ENCODE measurements at regions of chr14 and their contacts with region 1.

Region 1: DNA sequence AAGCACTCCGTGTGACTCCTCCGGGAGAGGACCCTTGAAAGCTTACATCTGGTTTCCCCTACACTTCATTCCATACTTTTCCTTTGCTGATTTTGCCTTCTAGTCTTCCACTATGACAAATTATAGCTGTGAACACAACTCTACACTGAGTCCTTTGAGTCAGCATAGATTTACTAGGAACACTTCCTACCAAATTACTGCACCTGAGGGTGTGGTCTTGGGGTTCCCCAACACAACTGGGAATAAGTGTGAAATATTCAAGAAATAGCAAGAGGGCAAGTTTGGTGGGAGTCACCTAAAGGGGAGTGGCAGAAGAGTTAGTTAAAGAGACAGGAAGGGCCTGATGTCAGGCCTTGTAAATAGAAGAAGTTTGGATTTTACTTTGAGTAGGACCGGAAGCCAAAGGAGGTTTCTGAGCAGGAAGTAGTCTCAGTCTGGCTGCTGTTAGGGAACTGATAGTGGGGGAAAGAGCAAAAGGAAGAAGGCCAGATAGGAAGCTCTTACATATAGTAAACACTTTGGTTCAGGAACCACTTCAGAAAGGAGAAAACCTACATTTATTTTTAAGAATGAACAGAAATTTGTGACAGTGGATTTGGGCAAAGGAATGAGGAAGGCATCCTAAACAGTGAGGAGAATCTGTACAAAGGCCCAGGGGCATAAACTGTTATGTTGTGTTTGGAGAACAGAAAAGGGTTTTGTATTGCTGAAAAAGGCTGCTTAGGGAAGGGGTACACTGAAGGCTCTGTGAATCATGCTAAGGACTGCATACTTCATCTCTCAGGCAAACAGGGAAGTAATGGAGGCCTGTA is 14.2 kb downstream of the SEL1L start:
- DNase-seq: peak in 1 of 2 donors; percentile 29
- ATAC-seq: peak; percentile 56 to 86 (median 79)
- H3K4me3 ChIP-seq: no peak overlapping the region
- H3K27ac ChIP-seq: peak overlapping the region in 9 of 10 donors; percentile 33 to 92 (median 69)
- H3K4me1 ChIP-seq: peaks cover 6 to 51% (median 40%) of the 10 kb centered on the region in 9 donors
- H3K27me3 ChIP-seq: no peaks in the 10 kb centered on the region
- CTCF ChIP-seq: no peak

Region 2: GRCh38 chr14:81533536-81534343 is 14.3 kb after region 1 on chr14 and contains the start of gene SEL1L:
- intact Hi-C with region 1: loop called in 1 of 10 experiments (anchors 2 kb)
- DNase-seq: peak; percentile 99 to 100
- ATAC-seq: peak; percentile 98 to 100 (median 99)
- H3K4me3 ChIP-seq: peak within 1 kb of the TSS; percentile 84 to 99 (median 94)
- H3K27ac ChIP-seq: peak within 1 kb of the TSS in 9 of 10 donors; percentile 19 to 92 (median 77)
- H3K4me1 ChIP-seq: peaks cover 0 to 79% (median 64%) of the 10 kb centered on the region in 9 donors
- H3K27me3 ChIP-seq: no peaks in the 10 kb centered on the region
- CTCF ChIP-seq: no peak
- total RNA-seq, gene SEL1L: 47.6 to 87.7 (median 58.3) TPM

Region 3: DNA sequence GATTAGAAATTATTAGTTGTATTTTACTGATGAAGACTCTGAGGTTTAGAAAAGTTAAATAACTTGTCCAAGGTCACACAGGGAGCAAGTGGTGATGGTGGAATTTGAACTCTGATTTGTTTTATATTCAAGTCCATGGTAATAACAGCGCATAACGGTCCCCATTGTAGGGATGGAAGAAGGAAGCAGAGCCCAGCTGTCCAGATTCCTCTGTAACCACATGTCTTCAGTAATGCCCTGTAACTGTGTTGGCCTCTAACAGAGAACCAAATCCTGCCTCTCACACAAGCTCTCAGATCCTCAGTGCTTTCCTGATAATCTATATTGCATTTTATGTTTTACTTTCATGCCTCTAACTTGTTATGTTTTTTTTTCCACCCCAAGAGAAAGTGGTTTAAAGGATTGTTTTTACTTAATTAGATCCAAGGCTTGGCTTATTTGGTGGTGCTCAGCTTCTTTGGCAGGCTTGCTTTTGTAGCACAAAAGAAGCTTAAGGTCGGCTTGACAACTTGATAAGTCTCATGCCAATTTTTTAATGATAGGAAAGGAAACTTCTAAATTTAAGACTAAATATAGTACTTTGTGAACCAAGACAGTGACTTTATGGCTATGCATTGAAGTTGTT is 119.4 kb after region 1 on chr14:
- intact Hi-C with region 1: no loop called
- DNase-seq: no peak
- ATAC-seq: no peak
- H3K4me3 ChIP-seq: no peak overlapping the region
- H3K27ac ChIP-seq: no peak overlapping the region
- H3K4me1 ChIP-seq: peaks cover 0 to 7% (median 0%) of the 10 kb centered on the region in 9 donors
- H3K27me3 ChIP-seq: no peaks in the 10 kb centered on the region
- CTCF ChIP-seq: no peak